Activated naive CD4-positive, alpha-beta T cell treated with anti-CD3 and anti-CD28 coated beads for 36 hours (primary cell): ENCODE measurements at regions of chr20 and their contacts with region 1.

Region 1: DNA sequence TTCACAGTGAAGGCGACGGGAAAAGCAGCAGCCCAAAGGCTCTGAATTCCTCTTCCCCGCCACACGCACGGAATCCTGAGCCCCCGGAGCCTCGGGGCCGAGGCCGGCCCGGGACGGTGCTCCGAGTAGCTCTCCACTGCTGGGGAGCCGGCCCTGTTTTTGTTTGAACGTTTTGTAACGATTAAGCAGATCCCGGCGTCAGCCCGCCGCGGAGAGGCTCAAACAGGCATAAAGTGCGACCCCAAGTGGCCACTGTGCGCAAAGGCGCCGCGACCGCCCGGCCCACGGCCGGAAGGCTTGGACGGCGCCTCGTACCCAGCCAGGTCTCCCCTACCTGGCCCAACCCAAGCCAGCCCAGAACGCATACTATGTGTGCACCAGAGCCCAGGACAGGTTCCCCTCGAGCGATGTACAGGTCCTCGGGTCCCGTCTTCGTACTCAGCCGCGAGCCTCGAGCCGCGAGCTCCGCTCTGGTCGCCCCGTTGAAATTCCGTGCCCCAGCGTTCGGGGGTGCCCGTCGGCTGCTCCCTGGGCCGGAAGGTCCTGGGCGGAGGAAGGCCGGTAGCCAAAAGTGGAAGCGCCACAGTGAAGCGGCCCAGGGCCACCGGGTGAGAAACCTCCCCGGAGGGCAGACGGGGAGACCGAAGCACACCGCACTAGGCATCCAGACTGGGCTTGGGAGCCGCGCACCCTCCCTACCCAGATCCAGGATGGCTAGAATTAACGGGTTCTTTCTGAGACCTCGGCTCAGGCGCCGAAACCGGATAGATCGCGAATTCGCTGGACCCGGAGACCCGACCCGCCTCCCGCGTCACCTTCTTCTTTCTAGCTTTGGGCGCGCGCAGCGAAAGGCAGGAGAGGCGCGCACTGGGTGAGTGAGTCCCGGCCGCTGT is 1.2 kb upstream of the MAFB start:
- DNase-seq: peak; percentile 85
- H3K4me3 Mint-ChIP-seq: peak overlapping the region; percentile 64
- H3K27ac Mint-ChIP-seq: no peak overlapping the region
- H3K4me1 Mint-ChIP-seq: peaks cover 11% of the 10 kb centered on the region
- H3K27me3 Mint-ChIP-seq: peaks cover 76% of the 10 kb centered on the region

Region 2: GRCh38 chr20:38730989-38731737 is 1959.0 kb before region 1 on chr20:
- CTCF ChIA-PET with region 1: no interaction called
- intact Hi-C with region 1: loop called (anchors 5 kb)
- DNase-seq: peak; percentile 85
- H3K4me3 Mint-ChIP-seq: peak overlapping the region; percentile 61
- H3K27ac Mint-ChIP-seq: no peak overlapping the region
- H3K4me1 Mint-ChIP-seq: peaks cover 39% of the 10 kb centered on the region
- H3K27me3 Mint-ChIP-seq: peaks cover 85% of the 10 kb centered on the region

Region 3: DNA sequence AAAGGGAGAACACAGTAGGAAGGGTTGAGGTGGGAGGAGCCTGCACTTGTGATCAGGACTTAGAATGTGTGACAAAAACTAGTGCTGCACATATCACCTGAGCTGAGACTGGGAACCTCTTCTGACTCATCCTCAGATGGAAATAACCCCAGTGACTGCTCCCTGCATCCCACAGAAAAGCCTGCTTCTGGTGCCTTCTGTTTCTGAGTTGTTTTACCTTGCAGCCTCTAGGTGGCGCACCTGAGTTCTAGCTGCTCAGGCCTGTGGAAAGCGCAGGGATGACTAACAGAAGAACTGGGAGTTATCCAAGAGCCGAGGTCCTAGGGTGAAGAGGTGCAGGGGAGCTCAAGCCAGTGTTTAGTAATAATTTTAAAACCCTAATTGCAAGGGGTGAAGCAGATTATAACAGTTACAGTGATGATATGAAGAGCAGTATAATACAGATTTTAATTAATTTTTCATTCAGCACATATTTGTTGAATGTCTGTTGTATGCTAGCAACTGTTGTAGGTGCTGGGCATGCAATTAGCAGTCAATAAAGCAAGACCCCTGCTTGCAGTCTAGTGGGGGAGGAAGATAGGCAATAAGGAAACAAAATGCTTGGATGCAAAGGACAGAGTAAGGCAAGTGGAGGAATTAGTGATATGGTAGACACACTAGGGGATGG is 1425.5 kb before region 1 on chr20:
- CTCF ChIA-PET with region 1: interaction called, 4 read pairs
- intact Hi-C with region 1: loop called (anchors 5 kb)
- DNase-seq: peak; percentile 65
- H3K4me3 Mint-ChIP-seq: no peak overlapping the region
- H3K27ac Mint-ChIP-seq: no peak overlapping the region
- H3K4me1 Mint-ChIP-seq: no peaks in the 10 kb centered on the region
- H3K27me3 Mint-ChIP-seq: peaks cover 2% of the 10 kb centered on the region

Region 4: DNA sequence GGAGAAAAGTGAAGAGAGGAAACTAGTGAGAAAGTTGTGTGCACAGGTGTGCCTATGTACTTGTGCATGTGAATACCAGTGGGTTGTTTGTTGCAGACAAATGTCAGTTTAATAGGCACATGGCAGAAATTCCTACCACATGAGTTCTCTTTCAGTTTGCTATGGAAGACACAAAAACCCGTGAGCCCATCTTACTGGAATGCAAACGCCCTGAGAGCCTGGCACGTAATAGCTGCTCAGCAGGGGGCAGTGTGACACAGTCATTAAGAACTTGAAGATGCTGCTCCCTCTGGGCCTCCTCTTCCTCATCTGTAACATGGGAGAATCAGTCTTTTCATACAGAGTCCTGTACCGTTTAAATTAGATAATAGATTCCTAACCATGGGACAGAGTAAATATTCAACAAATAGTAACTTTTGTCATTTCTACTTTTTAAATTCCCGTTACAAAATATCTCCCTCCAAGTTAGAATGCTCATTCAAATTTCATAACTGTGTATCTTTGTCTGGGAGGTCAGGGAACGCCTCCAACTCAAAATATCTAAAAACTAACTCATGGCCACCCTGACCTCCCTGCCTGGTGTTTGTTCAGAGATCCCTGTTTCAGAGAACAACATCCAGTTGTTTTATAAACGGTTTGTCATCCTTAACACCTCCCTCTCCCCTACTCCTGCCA is 804.1 kb before region 1 on chr20:
- CTCF ChIA-PET with region 1: no interaction called
- intact Hi-C with region 1: loop called (anchors 2 kb)
- DNase-seq: peak; percentile 49
- H3K4me3 Mint-ChIP-seq: no peak overlapping the region
- H3K27ac Mint-ChIP-seq: no peak overlapping the region
- H3K4me1 Mint-ChIP-seq: no peaks in the 10 kb centered on the region
- H3K27me3 Mint-ChIP-seq: no peaks in the 10 kb centered on the region

Region 5: DNA sequence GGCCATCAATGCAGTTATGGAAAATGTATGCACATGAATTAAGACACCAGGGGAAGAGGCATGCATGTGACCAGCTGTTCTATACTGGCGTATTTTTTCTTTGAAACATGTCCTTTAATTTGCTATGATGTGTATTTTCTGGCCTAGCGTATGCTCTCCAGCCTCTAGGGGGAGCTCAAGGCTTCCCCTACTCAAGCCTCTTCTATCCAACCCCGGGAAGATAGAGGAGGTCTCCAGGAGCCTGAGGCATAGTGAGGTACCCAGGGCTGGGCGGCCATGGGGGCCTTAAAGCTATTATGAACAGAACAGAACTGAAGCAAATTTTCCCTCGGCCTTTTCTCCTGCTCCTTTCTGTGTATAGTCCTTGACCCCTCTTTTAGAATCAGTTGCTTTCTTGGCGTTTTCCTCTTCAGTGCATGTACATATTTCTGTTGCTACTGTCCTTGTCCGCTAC is 530.1 kb before region 1 on chr20:
- CTCF ChIA-PET with region 1: no interaction called
- intact Hi-C with region 1: loop called (anchors 5 kb)
- DNase-seq: peak; percentile 18
- H3K4me3 Mint-ChIP-seq: no peak overlapping the region
- H3K27ac Mint-ChIP-seq: no peak overlapping the region
- H3K4me1 Mint-ChIP-seq: no peaks in the 10 kb centered on the region
- H3K27me3 Mint-ChIP-seq: no peaks in the 10 kb centered on the region

Region 6: DNA sequence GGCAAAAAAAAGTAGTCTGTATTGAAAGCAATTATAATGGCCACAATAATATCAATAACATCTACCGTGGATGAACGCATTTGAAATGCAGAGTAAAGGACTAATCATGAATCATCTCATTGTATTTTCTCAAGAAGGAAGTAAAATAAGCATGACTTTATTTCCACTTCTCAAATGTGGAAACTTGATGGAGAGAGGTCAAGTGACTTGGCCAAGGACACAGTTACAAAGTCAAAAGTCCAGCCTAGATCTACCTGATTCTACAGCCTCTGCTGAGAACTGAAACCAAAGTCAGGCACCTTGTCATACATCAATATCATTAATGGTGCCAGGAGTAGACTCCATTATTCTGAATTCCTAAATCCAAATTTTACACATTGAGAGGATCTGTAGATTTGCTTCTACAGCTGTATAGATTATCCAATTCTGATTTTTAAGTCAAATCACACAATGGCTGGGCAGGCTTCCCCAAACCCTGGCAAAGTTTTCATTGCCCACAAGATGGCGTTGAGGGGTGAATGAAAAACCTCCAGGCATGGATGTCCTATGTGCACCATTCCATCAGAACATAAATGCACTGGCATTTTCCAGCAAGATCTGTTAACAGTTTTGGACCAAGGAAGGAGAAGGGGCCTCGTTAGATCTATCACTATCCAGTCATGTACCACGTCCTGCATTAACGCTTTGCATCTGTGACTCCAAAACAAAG is 424.2 kb before region 1 on chr20:
- CTCF ChIA-PET with region 1: no interaction called
- intact Hi-C with region 1: loop called (anchors 5 kb)
- DNase-seq: no peak
- H3K4me3 Mint-ChIP-seq: no peak overlapping the region
- H3K27ac Mint-ChIP-seq: no peak overlapping the region
- H3K4me1 Mint-ChIP-seq: no peaks in the 10 kb centered on the region
- H3K27me3 Mint-ChIP-seq: peaks cover 2% of the 10 kb centered on the region